HepG2 (cell line): ENCODE measurements at regions of chr14 and their contacts with region 1.

Region 1: GRCh38 chr14:93959239-93960107 is 16.9 kb downstream of the ASB2 start:
- DNase-seq: peak; percentile 98
- ATAC-seq: peak; percentile 92
- H3K4me3 ChIP-seq: peak overlapping the region in 1 of 3 experiments; percentile 44; a peak in 2 of 6 replicates
- H3K27ac ChIP-seq: peak overlapping the region; percentile 79
- H3K4me1 ChIP-seq: peaks cover 86% of the 10 kb centered on the region
- H3K27me3 ChIP-seq: no peaks in the 10 kb centered on the region
- CTCF ChIP-seq: peak; percentile 26; the same call in 1 of the 2 replicates
- EP300 ChIP-seq: peak; percentile 83 to 97; a peak in 3 of 4 replicates
- POLR2A ChIP-seq: peak; percentile 60 to 82
- RAD21 ChIP-seq: peak; percentile 20; the same call in 1 of the 2 replicates

Region 2: GRCh38 chr14:93811676-93812075 is 147.8 kb before region 1 on chr14:
- CTCF ChIA-PET with region 1: no interaction called
- POLR2A ChIA-PET with region 1: no interaction called
- in situ Hi-C with region 1: no loop called
- intact Hi-C with region 1: no loop called
- DNase-seq: no peak
- ATAC-seq: no peak
- H3K4me3 ChIP-seq: no peak overlapping the region
- H3K27ac ChIP-seq: no peak overlapping the region
- H3K4me1 ChIP-seq: peaks cover 5% of the 10 kb centered on the region; the same call in 1 of the 2 replicates
- H3K27me3 ChIP-seq: peaks cover 0 to 16% of the 10 kb centered on the region in 2 experiments; a peak in 3 of 5 replicates
- CTCF ChIP-seq: no peak
- EP300 ChIP-seq: no peak
- POLR2A ChIP-seq: no peak
- RAD21 ChIP-seq: no peak

Region 3: DNA sequence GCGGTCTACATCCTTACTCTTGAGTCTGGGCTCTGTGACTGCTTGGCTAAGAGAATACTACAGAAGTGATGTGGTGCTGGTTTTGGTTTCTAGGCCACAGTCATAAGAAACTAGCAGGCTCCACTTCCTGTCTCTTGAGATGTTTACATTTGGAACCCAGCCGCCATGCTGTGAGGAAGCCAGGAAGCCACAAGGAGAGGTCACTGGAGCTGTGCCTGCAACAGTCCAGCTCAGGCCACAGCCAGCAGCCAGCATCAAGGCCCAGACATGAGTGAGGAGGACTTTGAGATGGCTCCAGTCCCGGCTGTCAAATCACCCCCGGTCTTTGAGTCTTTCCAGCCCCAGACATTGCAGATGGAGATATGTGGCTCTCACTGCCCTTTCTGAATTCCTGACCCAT is 45.2 kb before region 1 on chr14:
- CTCF ChIA-PET with region 1: no interaction called
- POLR2A ChIA-PET with region 1: no interaction called
- in situ Hi-C with region 1: no loop called
- intact Hi-C with region 1: no loop called
- DNase-seq: no peak
- ATAC-seq: no peak
- H3K4me3 ChIP-seq: no peak overlapping the region
- H3K27ac ChIP-seq: no peak overlapping the region
- H3K4me1 ChIP-seq: peaks cover 65% of the 10 kb centered on the region
- H3K27me3 ChIP-seq: no peaks in the 10 kb centered on the region; a peak in 1 of 5 replicates
- CTCF ChIP-seq: no peak
- EP300 ChIP-seq: no peak
- POLR2A ChIP-seq: no peak
- RAD21 ChIP-seq: no peak

Region 4: GRCh38 chr14:93939304-93940229 is 19.9 kb before region 1 on chr14:
- CTCF ChIA-PET with region 1: no interaction called
- POLR2A ChIA-PET with region 1: interaction called, 30 read pairs
- in situ Hi-C with region 1: no loop called
- intact Hi-C with region 1: no loop called
- DNase-seq: no peak
- ATAC-seq: peak; percentile 91
- H3K4me3 ChIP-seq: no peak overlapping the region
- H3K27ac ChIP-seq: no peak overlapping the region
- H3K4me1 ChIP-seq: peaks cover 25% of the 10 kb centered on the region
- H3K27me3 ChIP-seq: no peaks in the 10 kb centered on the region; a peak in 1 of 5 replicates
- CTCF ChIP-seq: peak; percentile 92
- EP300 ChIP-seq: no peak
- POLR2A ChIP-seq: no peak
- RAD21 ChIP-seq: peak; percentile 97

Region 5: GRCh38 chr14:93946104-93946503 is 13.4 kb before region 1 on chr14:
- CTCF ChIA-PET with region 1: no interaction called
- POLR2A ChIA-PET with region 1: interaction called, 30 read pairs
- in situ Hi-C with region 1: no loop called
- intact Hi-C with region 1: no loop called
- DNase-seq: no peak
- ATAC-seq: peak; percentile 40; the same call in 2 of the 3 replicates
- H3K4me3 ChIP-seq: no peak overlapping the region
- H3K27ac ChIP-seq: no peak overlapping the region
- H3K4me1 ChIP-seq: peaks cover 54% of the 10 kb centered on the region
- H3K27me3 ChIP-seq: no peaks in the 10 kb centered on the region; a peak in 2 of 5 replicates
- CTCF ChIP-seq: no peak
- EP300 ChIP-seq: no peak
- POLR2A ChIP-seq: no peak
- RAD21 ChIP-seq: no peak

Region 6: GRCh38 chr14:93970549-93970946 is 11.1 kb after region 1 on chr14:
- CTCF ChIA-PET with region 1: interaction called, 3 read pairs
- POLR2A ChIA-PET with region 1: interaction called, 17 read pairs
- in situ Hi-C with region 1: no loop called
- intact Hi-C with region 1: no loop called
- DNase-seq: peak; percentile 52
- ATAC-seq: peak; percentile 90
- H3K4me3 ChIP-seq: 0 out of 6 replicates have a peak overlapping the region, but pooled peaks of 2 of the 3 experiments have one; percentile 9 to 57
- H3K27ac ChIP-seq: no peak overlapping the region
- H3K4me1 ChIP-seq: peaks cover 44% of the 10 kb centered on the region
- H3K27me3 ChIP-seq: peaks cover 7 to 40% of the 10 kb centered on the region in 2 experiments
- CTCF ChIP-seq: peak; percentile 88
- EP300 ChIP-seq: no peak
- POLR2A ChIP-seq: no peak
- RAD21 ChIP-seq: peak; percentile 85

Region 7: GRCh38 chr14:93984987-93985410 is 25.5 kb after region 1 on chr14:
- CTCF ChIA-PET with region 1: no interaction called
- POLR2A ChIA-PET with region 1: interaction called, 16 read pairs
- in situ Hi-C with region 1: no loop called
- intact Hi-C with region 1: no loop called
- DNase-seq: peak; percentile 77
- ATAC-seq: peak; percentile 75
- H3K4me3 ChIP-seq: peak overlapping the region in 1 of 3 experiments; percentile 31; a peak in 1 of 6 replicates
- H3K27ac ChIP-seq: no peak overlapping the region
- H3K4me1 ChIP-seq: peaks cover 64% of the 10 kb centered on the region
- H3K27me3 ChIP-seq: peaks cover 0 to 16% of the 10 kb centered on the region in 2 experiments; a peak in 2 of 5 replicates
- CTCF ChIP-seq: peak; percentile 85
- EP300 ChIP-seq: no peak
- POLR2A ChIP-seq: no peak
- RAD21 ChIP-seq: peak; percentile 58; the same call in 1 of the 2 replicates